Endothelial cell of umbilical vein (primary cell): ENCODE measurements at regions of chr21 and their contacts with region 1.

Region 1: GRCh38 chr21:18812308-18812707 is 408.7 kb upstream of the TMPRSS15 start:
- DNase-seq: no peak
- H3K4me3 ChIP-seq: no peak overlapping the region
- H3K27ac ChIP-seq: no peak overlapping the region
- H3K4me1 ChIP-seq: no peaks in the 10 kb centered on the region
- H3K27me3 ChIP-seq: no peaks in the 10 kb centered on the region
- CTCF ChIP-seq: no peak
- POLR2A ChIP-seq: no peak

Region 2: DNA sequence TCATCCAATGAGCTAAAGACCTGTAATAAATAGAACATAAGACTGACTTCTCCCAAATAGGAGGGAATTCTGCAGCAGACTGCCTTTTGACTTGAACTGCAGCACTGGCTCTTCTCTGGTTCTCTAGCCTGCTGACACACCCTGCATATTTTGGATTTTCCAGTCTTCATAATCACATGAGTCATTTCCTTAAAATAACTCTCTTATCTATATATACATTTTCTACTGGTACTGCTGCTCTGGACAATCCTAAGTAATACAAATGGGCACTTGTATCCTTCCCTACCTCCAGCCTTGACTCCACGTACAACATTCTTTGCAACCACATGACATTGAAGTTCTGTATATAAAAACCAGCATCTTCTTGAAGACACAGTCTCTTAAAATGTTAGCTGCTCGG is 20.6 kb after region 1 on chr21:
- CTCF ChIA-PET with region 1: no interaction called
- POLR2A ChIA-PET with region 1: no interaction called
- dilution Hi-C with region 1: no loop called
- intact Hi-C with region 1: loop called (anchors 1 kb)
- DNase-seq: peak; percentile 46
- H3K4me3 ChIP-seq: no peak overlapping the region
- H3K27ac ChIP-seq: no peak overlapping the region
- H3K4me1 ChIP-seq: peaks cover 7% of the 10 kb centered on the region
- H3K27me3 ChIP-seq: no peaks in the 10 kb centered on the region
- CTCF ChIP-seq: no peak
- POLR2A ChIP-seq: no peak